Lower leg skin (tissue), 4 donors: ENCODE measurements at regions of chr7 and their contacts with region 1.

Region 1: GRCh38 chr7:67729771-67730170 is 733.1 kb downstream of the TYW1 start:
- DNase-seq: no peak
- H3K4me3 ChIP-seq: no peak overlapping the region
- CTCF ChIP-seq: no peak
- POLR2A ChIP-seq: no peak

Region 2: GRCh38 chr7:69187824-69188333 is 1458.1 kb after region 1 on chr7:
- intact Hi-C with region 1: loop called (anchors 5 kb)
- DNase-seq: no peak
- H3K4me3 ChIP-seq: no peak overlapping the region
- CTCF ChIP-seq: no peak
- POLR2A ChIP-seq: no peak